AG04449 (cell line): ENCODE measurements at regions of chr18 and their contacts with region 1.

Region 1: GRCh38 chr18:9575558-9575957 is 38.8 kb downstream of the PPP4R1 start:
- DNase-seq: peak; percentile 77
- H3K4me3 ChIP-seq: no peak overlapping the region
- CTCF ChIP-seq: peak; percentile 75

Region 2: GRCh38 chr18:9561759-9562158 is 13.8 kb before region 1 on chr18:
- CTCF ChIA-PET with region 1: interaction called, 66 read pairs
- POLR2A ChIA-PET with region 1: no interaction called
- DNase-seq: no peak
- H3K4me3 ChIP-seq: no peak overlapping the region
- CTCF ChIP-seq: no peak

Region 3: DNA sequence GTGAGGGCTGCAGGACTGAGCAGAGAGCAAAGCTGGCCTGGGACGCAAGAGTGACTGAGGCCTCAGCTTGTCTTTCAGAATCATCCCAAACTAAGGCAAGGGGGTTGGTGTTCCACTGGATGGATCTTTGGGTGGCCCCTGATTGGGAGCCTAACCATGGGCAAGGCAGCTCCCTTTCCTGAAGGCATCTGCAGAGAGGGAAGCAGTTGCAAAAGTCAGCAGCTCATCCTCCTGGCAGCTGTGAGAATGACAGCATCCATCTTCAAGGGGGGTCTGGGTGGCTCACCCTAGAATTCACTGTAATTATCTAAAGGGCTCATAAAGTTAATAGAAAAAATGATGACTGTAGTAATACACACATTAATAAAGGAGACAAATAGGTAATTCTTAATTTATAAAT is 86.0 kb after region 1 on chr18:
- CTCF ChIA-PET with region 1: interaction called, 15 read pairs
- POLR2A ChIA-PET with region 1: no interaction called
- DNase-seq: no peak
- H3K4me3 ChIP-seq: no peak overlapping the region
- CTCF ChIP-seq: peak; percentile 61